Dorsolateral prefrontal cortex (tissue), 120 donors: ENCODE measurements at regions of chr12 and their contacts with region 1.

Region 1: GRCh38 chr12:41277116-41277945 is 89.2 kb downstream of the PDZRN4 start:
- DNase-seq: peak in 4 of 10 donors; percentile 6 to 29 (median 19)
- H3K4me3 ChIP-seq: peak overlapping the region in 58 of 59 donors; percentile 4 to 64 (median 40)
- H3K27ac ChIP-seq: peak overlapping the region in 4 of 59 donors; percentile 1 to 44 (median 20)
- H3K27me3 ChIP-seq: no peaks in the 10 kb centered on the region
- CTCF ChIP-seq: peak; percentile 60 to 97 (median 82)

Region 2: GRCh38 chr12:41190338-41190737 is 87.0 kb before region 1 on chr12:
- intact Hi-C with region 1: loop called in 1 of 2 experiments (anchors 5 kb)
- DNase-seq: peak in 6 of 10 donors; percentile 27 to 68 (median 50)
- H3K4me3 ChIP-seq: peak overlapping the region; percentile 16 to 80 (median 61)
- H3K27ac ChIP-seq: peak overlapping the region in 27 of 59 donors; percentile 0 to 77 (median 59)
- H3K27me3 ChIP-seq: peaks cover 0 to 5% (median 0%) of the 10 kb centered on the region in 45 donors
- CTCF ChIP-seq: peak in 55 of 56 donors; percentile 34 to 74 (median 57)

Region 3: DNA sequence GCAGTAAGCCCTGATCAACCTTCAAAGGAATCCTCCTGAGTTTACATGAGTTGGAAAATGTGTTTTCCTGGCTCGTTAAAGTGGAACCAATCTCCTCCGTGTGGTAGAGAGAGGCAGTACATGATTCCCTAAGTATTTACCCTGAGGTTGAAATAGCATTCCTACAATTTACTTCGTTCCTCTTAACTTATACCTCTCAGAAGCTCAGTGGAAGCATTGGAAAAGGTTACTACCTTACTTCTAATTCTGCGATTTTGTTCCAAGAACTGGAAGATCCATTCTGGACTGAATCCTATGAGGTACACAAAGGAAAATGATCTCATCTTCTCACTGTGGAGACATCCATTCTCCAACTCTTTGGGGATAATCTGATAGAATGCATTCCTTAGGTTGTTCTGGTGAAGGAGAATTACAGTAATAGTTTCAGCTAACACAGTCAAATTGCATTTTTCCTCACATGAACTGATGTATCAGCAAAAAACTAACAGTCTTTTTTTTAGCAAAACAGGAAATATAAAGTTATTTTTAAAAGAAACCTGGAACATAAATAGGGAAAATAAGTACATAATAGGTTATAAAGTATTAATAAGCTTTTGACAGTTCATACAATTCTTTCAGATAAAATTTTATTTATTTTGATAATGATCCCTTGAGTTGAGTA is 386.4 kb after region 1 on chr12:
- intact Hi-C with region 1: loop called (anchors 2 to 5 kb)
- DNase-seq: no peak
- H3K4me3 ChIP-seq: no peak overlapping the region
- H3K27ac ChIP-seq: no peak overlapping the region
- H3K27me3 ChIP-seq: no peaks in the 10 kb centered on the region
- CTCF ChIP-seq: peak in 53 of 56 donors; percentile 7 to 64 (median 47)